Panc1 (cell line): ENCODE measurements at regions of chr10 and their contacts with region 1.

Region 1: DNA sequence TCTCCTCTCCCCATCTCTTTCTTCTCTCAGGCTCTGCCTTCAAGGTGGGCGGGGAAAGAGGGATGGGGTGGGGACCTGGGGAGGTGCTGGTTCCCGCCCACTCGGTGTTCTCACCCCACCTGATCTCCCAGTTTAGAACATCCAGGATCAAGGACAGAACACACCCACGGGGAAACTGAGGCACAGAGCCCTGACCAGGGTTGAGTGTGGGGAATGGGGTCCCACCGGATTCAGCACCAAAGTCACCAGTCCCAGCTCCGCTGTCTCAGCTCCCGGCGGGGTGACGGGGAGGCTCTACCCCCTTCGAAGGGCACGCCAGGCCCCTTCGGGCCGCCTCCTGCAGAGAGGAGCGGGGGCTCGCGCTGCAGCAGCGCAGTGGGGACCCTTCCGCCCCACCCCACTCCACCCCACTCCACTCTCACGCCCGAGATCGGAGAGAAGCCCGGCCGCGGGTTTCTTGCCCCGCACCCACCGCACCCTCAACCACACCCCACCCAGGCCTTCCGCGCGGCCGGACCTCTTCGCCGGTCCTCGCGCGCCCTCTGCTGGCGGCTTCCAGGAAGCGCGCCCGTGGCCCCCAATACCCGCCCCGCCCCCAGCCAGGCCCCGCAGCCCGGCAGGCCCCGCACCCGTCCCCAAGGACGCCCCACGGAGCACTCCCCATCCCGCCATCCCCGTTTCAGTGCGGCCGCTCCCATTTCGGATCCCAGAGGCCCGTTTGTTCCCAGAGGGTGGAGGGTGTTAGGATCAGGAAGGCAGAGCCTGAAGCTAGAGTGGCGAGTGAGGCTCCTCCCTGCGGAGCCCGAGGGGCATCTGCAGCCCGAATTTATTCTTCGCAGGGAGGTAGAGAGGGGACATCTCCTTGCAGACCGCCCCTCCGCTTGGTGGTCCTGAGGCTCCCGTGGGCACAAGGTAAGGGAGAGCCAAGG is 18.0 kb downstream of the POLL start:
- DNase-seq: no peak
- ATAC-seq: peak; percentile 87
- H3K4me3 ChIP-seq: peak overlapping the region; percentile 71 to 94
- H3K27ac ChIP-seq: peak overlapping the region; percentile 75
- H3K4me1 ChIP-seq: peaks cover 7% of the 10 kb centered on the region; the same call in 1 of the 2 replicates
- H3K27me3 ChIP-seq: peaks cover 7% of the 10 kb centered on the region
- CTCF ChIP-seq: peak; percentile 97

Region 2: GRCh38 chr10:101214446-101215396 is 355.4 kb before region 1 on chr10:
- CTCF ChIA-PET with region 1: interaction called, 21 read pairs
- POLR2A ChIA-PET with region 1: no interaction called
- in situ Hi-C with region 1: no loop called
- intact Hi-C with region 1: loop called (anchors 2 kb)
- DNase-seq: no peak
- ATAC-seq: peak; percentile 90
- H3K4me3 ChIP-seq: peak overlapping the region; percentile 46 to 68
- H3K27ac ChIP-seq: no peak overlapping the region
- H3K4me1 ChIP-seq: peaks cover 4% of the 10 kb centered on the region; the same call in 1 of the 2 replicates
- H3K27me3 ChIP-seq: peaks cover 12% of the 10 kb centered on the region
- CTCF ChIP-seq: peak; percentile 98

Region 3: DNA sequence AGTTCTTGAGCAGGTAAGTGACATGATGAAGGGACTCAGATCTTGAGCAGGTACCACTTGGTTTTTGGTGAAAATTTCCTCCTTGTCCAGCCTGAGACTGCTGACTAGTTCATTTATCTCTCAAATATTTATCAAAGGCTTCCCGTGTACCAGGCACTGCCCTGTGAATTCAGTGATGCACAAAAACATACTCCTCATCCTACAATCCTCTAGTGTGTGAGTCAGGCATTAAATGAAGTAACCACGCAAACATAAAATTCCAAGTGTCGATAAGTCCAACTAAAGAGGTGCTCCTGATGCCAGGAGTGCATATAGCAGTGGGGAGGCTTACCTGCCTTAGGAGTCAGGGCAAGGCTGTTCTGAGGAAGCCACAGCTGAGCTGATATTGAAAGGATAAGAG is 299.3 kb before region 1 on chr10:
- CTCF ChIA-PET with region 1: no interaction called
- POLR2A ChIA-PET with region 1: no interaction called
- in situ Hi-C with region 1: no loop called
- intact Hi-C with region 1: no loop called
- DNase-seq: no peak
- ATAC-seq: no peak
- H3K4me3 ChIP-seq: no peak overlapping the region
- H3K27ac ChIP-seq: no peak overlapping the region
- H3K4me1 ChIP-seq: no peaks in the 10 kb centered on the region
- H3K27me3 ChIP-seq: no peaks in the 10 kb centered on the region
- CTCF ChIP-seq: no peak

Region 4: GRCh38 chr10:101297901-101298486 is 272.1 kb before region 1 on chr10:
- CTCF ChIA-PET with region 1: interaction called, 18 read pairs
- POLR2A ChIA-PET with region 1: no interaction called
- in situ Hi-C with region 1: no loop called
- intact Hi-C with region 1: loop called (anchors 2 kb)
- DNase-seq: peak; percentile 45
- ATAC-seq: peak; percentile 88
- H3K4me3 ChIP-seq: no peak overlapping the region
- H3K27ac ChIP-seq: no peak overlapping the region
- H3K4me1 ChIP-seq: no peaks in the 10 kb centered on the region; the same call in 1 of the 2 replicates
- H3K27me3 ChIP-seq: peaks cover 2% of the 10 kb centered on the region
- CTCF ChIP-seq: peak; percentile 99

Region 5: DNA sequence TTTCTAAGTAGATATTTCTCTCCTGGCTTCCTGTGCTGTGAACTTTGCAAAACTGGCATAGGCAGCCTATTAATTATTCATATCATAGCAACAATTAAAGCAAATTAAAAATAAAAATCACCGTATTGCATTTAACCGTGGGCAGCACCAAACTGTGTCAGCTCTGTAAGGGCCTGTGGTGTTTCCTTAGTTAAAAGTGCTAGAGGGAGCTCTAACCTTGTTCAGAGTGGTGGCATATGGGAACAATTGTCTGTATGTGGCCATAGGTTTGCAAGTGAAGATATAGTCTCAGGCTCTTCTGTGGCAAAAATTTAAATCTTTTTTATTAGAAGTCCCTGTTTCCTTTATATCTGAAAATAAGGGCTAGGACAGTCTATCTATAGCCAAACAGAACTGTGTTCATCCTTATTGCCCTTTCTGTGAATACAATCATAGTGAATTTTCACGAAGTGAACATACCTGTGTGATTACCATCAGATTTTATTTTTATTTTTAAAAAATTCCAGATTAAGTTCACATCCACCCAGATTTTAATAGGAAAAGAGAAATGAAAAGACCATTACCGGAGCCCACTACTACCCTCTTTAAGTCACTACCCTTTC is 74.7 kb before region 1 on chr10:
- CTCF ChIA-PET with region 1: interaction called, 14 read pairs
- POLR2A ChIA-PET with region 1: no interaction called
- in situ Hi-C with region 1: no loop called
- intact Hi-C with region 1: no loop called
- DNase-seq: peak; percentile 12
- ATAC-seq: peak; percentile 99
- H3K4me3 ChIP-seq: no peak overlapping the region
- H3K27ac ChIP-seq: no peak overlapping the region
- H3K4me1 ChIP-seq: no peaks in the 10 kb centered on the region
- H3K27me3 ChIP-seq: no peaks in the 10 kb centered on the region
- CTCF ChIP-seq: peak; percentile 81